ENCODE measurements at regions of chr9 and their contacts with region 1.

Region 1: DNA sequence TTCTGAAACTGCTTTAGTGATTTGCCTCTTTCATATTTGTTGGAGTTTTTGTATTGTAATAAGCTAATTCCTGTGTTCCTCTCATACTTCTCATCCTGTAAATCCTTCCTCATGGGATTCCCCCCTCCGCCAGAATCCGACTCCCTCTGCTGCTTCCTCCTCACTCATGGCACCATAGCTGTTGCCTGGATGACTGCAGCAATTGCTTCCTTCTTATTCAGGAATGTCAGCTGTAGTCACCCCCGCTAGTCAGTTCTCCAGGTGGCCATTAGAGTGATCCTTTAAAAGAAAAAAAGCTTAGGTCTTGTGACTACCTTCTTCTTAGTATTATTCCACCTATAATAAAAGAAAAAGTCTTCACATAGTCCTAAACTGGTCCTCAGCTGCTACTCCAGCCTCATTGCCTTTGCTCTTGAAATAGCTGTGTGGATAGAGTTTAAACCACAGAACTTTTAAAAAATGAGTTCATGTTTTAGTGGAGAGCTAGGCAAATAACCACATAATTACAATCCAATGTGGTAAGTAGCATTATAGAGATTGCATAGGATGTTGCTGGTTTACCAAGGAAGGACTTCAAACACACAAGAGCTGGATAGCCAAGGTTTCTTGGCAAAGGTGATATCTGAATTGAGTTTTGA is 227.3 kb downstream of the KDM4C start:
- DNase-seq: no peak
- H3K4me3 ChIP-seq: no peak overlapping the region
- H3K27ac ChIP-seq: no peak overlapping the region
- H3K4me1 ChIP-seq: no peaks in the 10 kb centered on the region
- H3K27me3 ChIP-seq: no peaks in the 10 kb centered on the region
- CTCF ChIP-seq: no peak
- POLR2A ChIP-seq: no peak

Region 2: GRCh38 chr9:6703898-6704639 is 281.0 kb before region 1 on chr9:
- CTCF ChIA-PET with region 1: no interaction called
- POLR2A ChIA-PET with region 1: no interaction called
- dilution Hi-C with region 1: no loop called
- intact Hi-C with region 1: loop called (anchors 5 kb)
- DNase-seq: peak; percentile 86
- H3K4me3 ChIP-seq: peak overlapping the region; percentile 21 to 61 (median 53)
- H3K27ac ChIP-seq: peak overlapping the region; percentile 16
- H3K4me1 ChIP-seq: peaks cover 5% of the 10 kb centered on the region
- H3K27me3 ChIP-seq: no peaks in the 10 kb centered on the region
- CTCF ChIP-seq: no peak
- POLR2A ChIP-seq: peak; percentile 79

Region 3: DNA sequence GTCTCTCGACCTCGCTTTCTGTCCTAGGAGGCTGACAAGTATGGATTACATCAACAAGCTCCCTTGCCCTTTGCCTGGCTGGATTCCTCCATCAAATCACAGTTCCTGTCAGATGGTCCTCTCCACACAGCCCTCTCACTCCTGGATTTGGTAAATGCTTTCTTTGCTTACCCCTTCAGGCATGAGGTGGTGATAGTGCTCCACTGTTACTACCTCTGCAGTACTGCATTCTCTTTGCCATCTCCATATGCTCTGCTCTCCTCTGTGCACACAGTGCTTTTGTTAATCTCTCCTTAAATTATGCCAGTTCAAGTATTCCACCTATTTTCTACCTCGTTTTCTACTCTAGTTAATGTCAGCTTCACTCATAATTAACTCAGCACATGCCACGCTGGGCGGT is 535.3 kb after region 1 on chr9:
- CTCF ChIA-PET with region 1: no interaction called
- POLR2A ChIA-PET with region 1: no interaction called
- dilution Hi-C with region 1: no loop called
- intact Hi-C with region 1: no loop called
- DNase-seq: no peak
- H3K4me3 ChIP-seq: no peak overlapping the region
- H3K27ac ChIP-seq: no peak overlapping the region
- H3K4me1 ChIP-seq: no peaks in the 10 kb centered on the region
- H3K27me3 ChIP-seq: no peaks in the 10 kb centered on the region
- CTCF ChIP-seq: no peak
- POLR2A ChIP-seq: no peak

Measured in endothelial cell of umbilical vein (primary cell).